HCT116 (cell line): ENCODE measurements at regions of chr11 and their contacts with region 1.

Region 1: DNA sequence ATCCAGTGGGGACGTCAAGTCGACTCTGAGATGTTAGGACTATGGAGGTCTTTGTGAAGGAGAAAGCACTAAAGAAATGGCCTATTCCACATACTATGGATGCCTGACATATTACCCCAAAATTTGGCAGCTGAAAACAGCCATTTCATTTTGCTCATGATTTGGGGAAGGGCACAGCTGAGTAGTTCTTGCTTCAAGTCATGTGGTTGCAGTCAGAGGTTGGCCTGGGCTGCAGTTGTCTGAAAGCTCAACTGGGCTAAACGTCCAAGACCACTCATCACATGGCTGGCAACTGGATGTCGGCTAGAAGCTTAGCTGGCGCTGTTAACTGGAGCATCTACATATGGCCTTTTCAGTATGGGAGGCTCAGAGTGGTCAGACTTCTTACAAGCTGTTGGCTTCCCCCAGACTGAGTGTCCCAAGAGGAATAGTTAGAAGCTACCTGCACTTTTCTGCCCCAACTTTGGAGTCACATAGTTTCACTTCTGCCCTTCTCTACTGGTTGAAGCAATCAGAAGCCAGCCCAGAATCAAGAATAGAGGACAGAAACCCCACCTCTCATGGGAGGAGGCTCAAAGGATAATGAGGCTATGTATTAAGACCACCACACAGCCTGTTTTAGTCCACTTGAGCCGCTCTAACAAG is 14.1 kb downstream of the SLC35C1 start:
- DNase-seq: no peak
- ATAC-seq: no peak
- H3K4me3 ChIP-seq: no peak overlapping the region
- H3K27ac ChIP-seq: no peak overlapping the region
- H3K4me1 ChIP-seq: peaks cover 6% of the 10 kb centered on the region in 2 experiments; a peak in 3 of 4 replicates
- H3K27me3 ChIP-seq: no peaks in the 10 kb centered on the region
- CTCF ChIP-seq: no peak
- POLR2A ChIP-seq: no peak
- RAD21 ChIP-seq: no peak

Region 2: DNA sequence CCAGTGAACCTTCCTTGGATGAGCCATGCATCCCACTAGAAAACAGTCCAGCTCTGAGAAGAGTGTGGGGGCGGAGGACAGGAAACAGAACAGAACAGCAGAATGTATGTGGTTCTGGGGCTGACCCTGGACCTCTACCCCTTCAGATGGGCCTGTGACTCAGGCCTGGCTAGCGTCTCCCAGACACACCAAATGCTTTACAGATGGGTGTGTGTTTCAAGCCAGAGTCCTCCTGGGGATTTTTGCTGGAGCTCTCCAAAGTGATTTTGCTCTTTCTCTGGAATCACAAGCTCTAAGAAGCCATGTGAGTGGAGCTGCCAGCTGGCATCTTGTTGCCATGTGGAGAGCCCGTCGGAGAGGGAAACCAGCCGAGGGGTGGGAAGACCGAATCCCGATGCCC is 1788.3 kb after region 1 on chr11:
- CTCF ChIA-PET with region 1: no interaction called
- POLR2A ChIA-PET with region 1: no interaction called
- RAD21 ChIA-PET with region 1: interaction called in 1 of 2 experiments, 11 read pairs
- intact Hi-C with region 1: no loop called
- DNase-seq: no peak
- ATAC-seq: no peak
- H3K4me3 ChIP-seq: no peak overlapping the region
- H3K27ac ChIP-seq: no peak overlapping the region
- H3K4me1 ChIP-seq: no peaks in the 10 kb centered on the region
- H3K27me3 ChIP-seq: no peaks in the 10 kb centered on the region; the same call in 1 of the 2 replicates
- CTCF ChIP-seq: no peak
- POLR2A ChIP-seq: no peak
- RAD21 ChIP-seq: no peak